OCI-LY7 (cell line): ENCODE measurements at regions of chr2 and their contacts with region 1.

Region 1: DNA sequence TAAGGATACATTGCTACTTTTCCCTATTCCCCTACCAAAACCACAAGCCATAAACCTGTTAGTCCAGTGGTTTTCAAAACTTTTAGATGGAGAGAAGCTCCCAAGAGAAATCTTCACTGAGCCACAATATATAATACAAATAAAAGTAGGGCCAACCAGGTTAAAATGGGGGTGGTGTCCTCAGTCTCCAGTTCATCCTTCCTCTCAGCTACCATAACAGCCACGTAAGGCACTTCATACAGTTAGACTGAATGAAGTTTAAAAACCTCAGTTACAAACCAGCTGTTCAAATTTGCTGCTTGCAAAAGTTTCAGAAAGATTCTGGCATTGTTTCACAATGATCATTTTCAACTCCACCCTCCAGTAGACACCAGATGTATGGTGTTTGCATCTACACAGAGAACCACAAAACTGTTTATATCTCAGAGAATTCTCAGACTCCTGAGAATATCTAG is 26.0 kb downstream of the SOS1 start:
- DNase-seq: no peak
- H3K4me3 ChIP-seq: no peak overlapping the region
- H3K27ac ChIP-seq: no peak overlapping the region
- H3K4me1 ChIP-seq: peaks cover 22% of the 10 kb centered on the region
- CTCF ChIP-seq: no peak

Region 2: GRCh38 chr2:38766866-38767534 is 327.9 kb before region 1 on chr2:
- CTCF ChIA-PET with region 1: no interaction called
- POLR2A ChIA-PET with region 1: no interaction called
- intact Hi-C with region 1: no loop called
- DNase-seq: no peak
- H3K4me3 ChIP-seq: no peak overlapping the region
- H3K27ac ChIP-seq: no peak overlapping the region
- H3K4me1 ChIP-seq: no peaks in the 10 kb centered on the region
- CTCF ChIP-seq: no peak

Region 3: DNA sequence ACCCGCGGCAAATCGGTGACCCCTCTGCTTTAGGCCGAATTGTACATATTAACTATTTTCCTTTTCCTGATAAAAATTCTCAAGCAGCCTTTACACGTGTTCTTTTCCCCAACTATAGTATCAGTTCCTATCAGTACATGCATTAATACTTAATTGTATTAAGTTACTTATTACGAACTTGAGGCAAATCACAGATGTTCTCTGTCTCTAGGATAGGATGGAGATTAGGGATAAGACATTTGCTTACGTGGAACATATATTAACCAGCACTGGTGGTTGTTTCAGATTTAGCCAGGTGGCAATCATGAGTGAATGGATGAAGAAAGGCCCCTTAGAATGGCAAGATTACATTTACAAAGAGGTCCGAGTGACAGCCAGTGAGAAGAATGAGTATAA is 316.2 kb before region 1 on chr2:
- CTCF ChIA-PET with region 1: no interaction called
- POLR2A ChIA-PET with region 1: no interaction called
- intact Hi-C with region 1: no loop called
- DNase-seq: peak; percentile 17
- H3K4me3 ChIP-seq: peak overlapping the region; percentile 84
- H3K27ac ChIP-seq: peak overlapping the region; percentile 33
- H3K4me1 ChIP-seq: peaks cover 7% of the 10 kb centered on the region
- CTCF ChIP-seq: 0 out of 2 replicates have a peak, but pooled peaks have one; percentile 4

Region 4: GRCh38 chr2:38835015-38835601 is 259.8 kb before region 1 on chr2:
- CTCF ChIA-PET with region 1: no interaction called
- POLR2A ChIA-PET with region 1: no interaction called
- intact Hi-C with region 1: no loop called
- DNase-seq: peak; percentile 42
- H3K4me3 ChIP-seq: no peak overlapping the region
- H3K27ac ChIP-seq: no peak overlapping the region
- H3K4me1 ChIP-seq: no peaks in the 10 kb centered on the region
- CTCF ChIP-seq: peak; percentile 81

Region 5: GRCh38 chr2:38945372-38945771 is 149.5 kb before region 1 on chr2:
- CTCF ChIA-PET with region 1: no interaction called
- POLR2A ChIA-PET with region 1: no interaction called
- intact Hi-C with region 1: no loop called
- DNase-seq: no peak
- H3K4me3 ChIP-seq: no peak overlapping the region
- H3K27ac ChIP-seq: no peak overlapping the region
- H3K4me1 ChIP-seq: no peaks in the 10 kb centered on the region
- CTCF ChIP-seq: no peak

Region 6: GRCh38 chr2:39107156-39107555 is 12.3 kb after region 1 on chr2:
- CTCF ChIA-PET with region 1: no interaction called
- POLR2A ChIA-PET with region 1: interaction called, 28 read pairs
- intact Hi-C with region 1: no loop called
- DNase-seq: peak; percentile 9
- H3K4me3 ChIP-seq: no peak overlapping the region
- H3K27ac ChIP-seq: no peak overlapping the region
- H3K4me1 ChIP-seq: peaks cover 38% of the 10 kb centered on the region
- CTCF ChIP-seq: no peak